Activated T-helper 2 cell treated with anti-CD3 and anti-CD28 coated beads, Interferon-gamma antibody, Interleukin-2, Interleukin-4, amounts not matched to agents 10 μg/mL and 5 μg/mL and 100 μg/mL, durations not matched to agents 14 hours and 24 hours and 36 hours (primary cell): ENCODE measurements at regions of chr14 and their contacts with region 1.

Region 1: GRCh38 chr14:88792572-88793258 is at the start of gene EML5:
- DNase-seq: peak; percentile 76
- H3K4me3 Mint-ChIP-seq: peak within 1 kb of the TSS; percentile 74
- H3K27ac Mint-ChIP-seq: no peak within 1 kb of the TSS
- H3K4me1 Mint-ChIP-seq: peaks cover 4% of the 10 kb centered on the region
- H3K27me3 Mint-ChIP-seq: peaks cover 37% of the 10 kb centered on the region
- total RNA-seq, gene EML5: 0.39 and 0.55 TPM in 2 replicates

Region 2: GRCh38 chr14:88551094-88551870 is 241.4 kb before region 1 on chr14:
- intact Hi-C with region 1: loop called (anchors 5 kb)
- DNase-seq: no peak
- H3K4me3 Mint-ChIP-seq: peak overlapping the region; percentile 69
- H3K27ac Mint-ChIP-seq: no peak overlapping the region
- H3K4me1 Mint-ChIP-seq: peaks cover 14% of the 10 kb centered on the region
- H3K27me3 Mint-ChIP-seq: peaks cover 38% of the 10 kb centered on the region

Region 3: GRCh38 chr14:88688386-88688785 is 104.3 kb before region 1 on chr14:
- intact Hi-C with region 1: no loop called
- DNase-seq: no peak
- H3K4me3 Mint-ChIP-seq: no peak overlapping the region
- H3K27ac Mint-ChIP-seq: no peak overlapping the region
- H3K4me1 Mint-ChIP-seq: no peaks in the 10 kb centered on the region
- H3K27me3 Mint-ChIP-seq: no peaks in the 10 kb centered on the region

Region 4: DNA sequence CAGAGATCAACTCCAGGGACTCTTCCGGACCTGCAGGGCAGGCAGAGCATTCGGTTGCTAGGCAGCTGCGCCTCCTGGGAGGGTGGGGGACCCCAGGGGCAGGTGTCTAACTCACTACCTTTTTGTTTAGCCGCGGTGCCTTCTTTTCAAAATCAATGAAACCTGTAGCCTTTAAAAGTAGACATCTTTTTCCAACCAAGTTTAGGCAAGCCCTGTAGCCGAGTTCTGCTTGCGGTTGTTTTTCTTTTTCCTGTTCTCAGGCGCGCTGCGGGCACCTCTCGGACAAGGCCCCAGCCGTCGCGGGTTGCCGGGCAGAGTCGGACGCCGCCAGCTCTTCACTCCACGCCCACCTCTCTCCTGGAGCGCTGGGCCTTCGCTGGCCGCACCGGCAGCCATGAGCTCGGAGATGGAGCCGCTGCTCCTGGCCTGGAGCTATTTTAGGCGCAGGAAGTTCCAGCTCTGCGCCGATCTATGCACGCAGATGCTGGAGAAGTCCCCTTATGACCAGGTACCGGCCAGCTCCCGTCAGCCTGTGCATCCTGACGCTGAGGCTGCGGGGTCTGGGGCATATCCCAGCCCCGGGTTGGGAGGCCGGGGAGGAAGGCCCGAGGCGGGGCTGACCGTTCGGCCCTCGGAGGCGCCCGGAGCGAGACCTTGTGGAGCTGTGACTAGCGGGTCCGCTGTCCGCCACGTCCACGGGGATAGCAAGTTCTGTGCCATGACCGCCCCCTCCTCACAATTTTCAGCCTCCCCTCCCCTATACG is 31.8 kb after region 1 on chr14 and contains the start of gene TTC8:
- intact Hi-C with region 1: loop called (anchors 1 kb)
- DNase-seq: peak; percentile 76
- H3K4me3 Mint-ChIP-seq: peak within 1 kb of the TSS; percentile 83
- H3K27ac Mint-ChIP-seq: peak within 1 kb of the TSS; percentile 94
- H3K4me1 Mint-ChIP-seq: peaks cover 10% of the 10 kb centered on the region
- H3K27me3 Mint-ChIP-seq: peaks cover 15% of the 10 kb centered on the region
- total RNA-seq, gene TTC8: 2.1 and 3.1 TPM in 2 replicates

Region 5: DNA sequence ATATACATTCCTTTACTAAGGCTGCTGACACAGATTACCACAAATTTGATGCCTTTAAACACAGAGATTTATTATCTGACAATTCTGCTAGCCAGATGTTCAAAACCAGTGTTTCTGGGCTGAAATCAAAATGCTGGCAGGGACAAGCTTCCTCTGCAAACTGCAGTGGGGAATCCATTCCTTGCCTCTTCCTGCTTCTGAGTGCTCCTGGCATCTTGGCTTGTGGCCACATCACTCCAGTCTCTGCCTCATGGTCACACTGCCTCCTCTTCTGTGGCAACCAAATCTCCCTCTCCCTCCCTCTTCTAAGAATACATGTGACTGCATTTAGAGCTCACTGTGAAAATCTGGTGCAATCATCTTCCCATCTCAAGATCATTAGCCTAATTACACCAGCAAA is 267.5 kb after region 1 on chr14:
- intact Hi-C with region 1: no loop called
- DNase-seq: no peak
- H3K4me3 Mint-ChIP-seq: no peak overlapping the region
- H3K27ac Mint-ChIP-seq: no peak overlapping the region
- H3K4me1 Mint-ChIP-seq: no peaks in the 10 kb centered on the region
- H3K27me3 Mint-ChIP-seq: peaks cover 41% of the 10 kb centered on the region